ENCODE measurements at regions of chr10 and their contacts with region 1.

Region 1: DNA sequence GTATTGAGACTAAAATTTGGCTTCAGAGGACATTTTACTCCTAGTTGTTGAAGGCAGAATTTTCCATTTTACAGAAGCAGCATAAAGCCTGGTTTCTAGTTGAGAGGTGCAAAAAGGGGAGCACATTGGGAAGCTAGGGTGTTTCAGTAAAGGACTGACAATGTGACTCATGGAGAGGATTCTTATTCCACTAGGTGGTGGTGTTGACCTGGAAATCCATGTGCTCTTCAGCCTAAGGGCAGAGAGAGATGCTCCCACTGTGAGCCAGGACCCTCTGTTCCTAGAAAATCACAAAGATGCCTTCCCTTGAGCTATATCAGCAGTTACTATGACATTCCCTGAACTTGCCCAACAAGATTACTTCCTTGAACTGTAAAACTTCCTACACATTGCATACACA is 687.8 kb downstream of the IPMK start:
- DNase-seq: no peak
- ATAC-seq: peak; percentile 81 to 88 (median 84)
- H3K4me3 ChIP-seq: no peak overlapping the region
- H3K27ac ChIP-seq: no peak overlapping the region
- H3K4me1 ChIP-seq: no peaks in the 10 kb centered on the region
- H3K27me3 ChIP-seq: no peaks in the 10 kb centered on the region
- CTCF ChIP-seq: peak; percentile 37 to 68 (median 54)
- POLR2A ChIP-seq: no peak

Region 2: DNA sequence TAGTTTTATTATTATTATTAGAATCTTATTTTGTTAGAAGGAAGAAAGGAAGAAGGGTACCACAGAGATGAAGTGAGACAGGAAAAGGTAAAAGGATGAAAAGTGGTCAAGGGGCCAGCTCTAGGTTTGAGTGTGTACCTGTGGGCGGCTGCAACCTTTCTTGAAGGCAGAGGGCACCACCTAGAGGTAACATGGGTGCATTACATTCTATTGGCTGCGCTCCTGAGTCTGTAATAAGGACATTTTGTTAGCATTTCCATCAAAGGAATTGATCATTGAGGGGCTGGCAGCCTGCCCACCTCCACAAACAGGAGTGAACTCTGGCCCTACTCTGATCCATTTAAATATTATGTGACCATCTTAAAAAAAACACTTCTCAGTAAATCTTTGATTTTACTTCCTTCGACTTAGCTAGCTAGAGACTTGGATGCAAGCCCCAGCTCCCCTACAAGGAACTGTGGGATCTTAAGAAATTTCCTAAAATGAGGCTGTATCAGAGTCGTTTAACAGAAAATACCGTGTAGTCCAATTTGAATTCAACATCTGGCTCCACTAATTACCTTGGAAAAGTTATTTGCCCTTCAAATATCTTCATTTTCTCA is 77.3 kb after region 1 on chr10:
- intact Hi-C with region 1: loop called (anchors 10 kb)
- DNase-seq: peak; percentile 62 to 73 (median 71)
- ATAC-seq: peak; percentile 99 to 100 (median 100)
- H3K4me3 ChIP-seq: no peak overlapping the region
- H3K27ac ChIP-seq: no peak overlapping the region
- H3K4me1 ChIP-seq: no peaks in the 10 kb centered on the region
- H3K27me3 ChIP-seq: no peaks in the 10 kb centered on the region
- CTCF ChIP-seq: peak; percentile 77 to 90 (median 84)
- POLR2A ChIP-seq: no peak

Region 3: GRCh38 chr10:57769298-57769697 is 189.4 kb after region 1 on chr10:
- intact Hi-C with region 1: no loop called
- DNase-seq: no peak
- ATAC-seq: no peak
- H3K4me3 ChIP-seq: no peak overlapping the region
- H3K27ac ChIP-seq: no peak overlapping the region
- H3K4me1 ChIP-seq: no peaks in the 10 kb centered on the region
- H3K27me3 ChIP-seq: no peaks in the 10 kb centered on the region
- CTCF ChIP-seq: no peak
- POLR2A ChIP-seq: no peak